ENCODE measurements at regions of chr1 and their contacts with region 1.

Region 1: DNA sequence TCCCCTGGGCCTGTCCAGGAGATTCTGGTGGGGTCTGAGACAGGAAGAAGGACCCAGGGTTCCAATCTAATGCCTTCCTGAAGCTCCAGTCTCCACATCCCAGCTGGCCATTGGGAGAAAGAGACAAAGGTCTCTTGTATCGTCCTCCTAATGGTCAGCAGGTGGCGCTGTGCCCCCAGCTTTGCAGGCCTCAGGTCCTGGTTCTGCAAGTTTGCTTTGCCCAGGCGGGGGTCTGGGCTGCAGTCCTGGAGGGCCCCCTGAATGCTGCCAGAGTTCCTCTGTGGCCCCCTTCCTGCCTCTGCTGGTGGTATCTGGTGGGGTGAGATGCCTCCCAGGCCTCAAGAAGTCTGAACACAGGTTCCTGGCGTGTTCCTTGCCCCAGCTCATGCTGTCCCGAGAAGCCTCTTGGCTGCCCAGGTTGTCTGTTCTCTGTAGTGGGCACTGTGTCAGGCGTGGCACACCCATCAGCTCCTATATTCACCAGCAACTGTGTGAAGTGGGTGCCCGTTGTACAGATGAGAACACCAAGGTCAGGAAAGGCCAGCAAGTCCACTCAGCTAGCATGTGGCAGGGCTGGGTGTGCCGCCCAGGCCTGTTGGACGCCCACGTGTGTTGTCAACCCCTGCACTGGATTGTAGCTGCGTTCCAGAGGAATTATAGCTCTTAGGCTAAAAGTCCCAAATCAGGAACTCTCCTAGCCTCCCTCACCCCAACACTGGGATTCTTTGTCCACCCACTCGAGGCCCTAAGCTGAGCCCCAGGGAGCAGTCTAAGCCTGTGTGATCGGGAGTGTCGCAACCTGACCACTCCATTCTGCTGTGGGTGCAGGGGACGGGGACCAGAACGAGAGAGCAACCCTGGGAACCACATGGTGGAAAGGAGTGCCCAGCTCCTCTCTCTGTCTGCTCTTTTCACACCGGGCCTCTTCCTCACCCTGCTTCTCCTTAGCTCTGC is 33.9 kb upstream of the CSF3R start:
- DNase-seq: peak; percentile 68
- ATAC-seq: peak; percentile 77
- H3K4me3 Mint-ChIP-seq: no peak overlapping the region
- H3K27ac Mint-ChIP-seq: no peak overlapping the region
- H3K4me1 Mint-ChIP-seq: no peaks in the 10 kb centered on the region
- H3K27me3 Mint-ChIP-seq: no peaks in the 10 kb centered on the region

Region 2: GRCh38 chr1:36239941-36240637 is 276.6 kb before region 1 on chr1:
- CTCF ChIA-PET with region 1: no interaction called
- POLR2A ChIA-PET with region 1: no interaction called
- intact Hi-C with region 1: no loop called
- DNase-seq: no peak
- ATAC-seq: no peak
- H3K4me3 Mint-ChIP-seq: no peak overlapping the region
- H3K27ac Mint-ChIP-seq: no peak overlapping the region
- H3K4me1 Mint-ChIP-seq: peaks cover 46% of the 10 kb centered on the region
- H3K27me3 Mint-ChIP-seq: no peaks in the 10 kb centered on the region

Region 3: DNA sequence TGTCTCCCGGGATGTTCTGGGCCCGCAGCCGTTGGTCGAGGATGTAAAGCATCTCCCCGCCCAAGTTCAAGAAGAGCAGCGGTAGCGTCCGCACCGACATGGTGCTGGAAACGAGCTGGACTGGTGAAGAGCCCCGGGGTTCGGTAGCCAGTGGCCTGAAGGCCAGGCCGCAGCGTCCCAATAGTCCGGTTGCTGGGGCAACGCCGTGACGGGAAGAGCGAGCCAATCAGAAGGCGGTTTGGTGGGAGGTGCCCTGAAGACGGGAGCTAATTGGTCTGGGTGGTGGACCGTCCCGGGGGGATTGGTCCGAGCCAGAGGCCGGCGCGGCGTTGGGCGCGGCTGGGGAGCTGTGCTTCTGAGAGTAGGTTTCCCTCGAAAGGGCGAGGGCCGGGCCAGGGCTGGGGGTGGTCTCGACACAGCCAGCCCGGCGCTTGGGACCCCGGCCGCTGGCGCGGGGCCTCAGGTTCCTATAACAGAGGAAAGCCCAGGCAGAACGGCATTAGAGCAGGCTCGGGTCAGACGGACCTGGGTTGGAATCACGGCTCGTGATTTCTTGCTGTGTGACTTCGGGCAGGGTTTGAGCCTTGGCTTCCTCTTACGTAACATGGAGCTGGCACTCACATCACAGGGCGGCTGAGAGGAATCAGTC is 66.3 kb before region 1 on chr1 and contains the start of gene OSCP1:
- CTCF ChIA-PET with region 1: no interaction called
- POLR2A ChIA-PET with region 1: no interaction called
- intact Hi-C with region 1: no loop called
- DNase-seq: peak; percentile 91
- ATAC-seq: peak; percentile 98
- H3K4me3 Mint-ChIP-seq: peak within 1 kb of the TSS; percentile 83
- H3K27ac Mint-ChIP-seq: peak within 1 kb of the TSS; percentile 83
- H3K4me1 Mint-ChIP-seq: peaks cover 16% of the 10 kb centered on the region
- H3K27me3 Mint-ChIP-seq: no peaks in the 10 kb centered on the region
- total RNA-seq, gene OSCP1: 2.2 to 2.8 TPM

Region 4: GRCh38 chr1:36497207-36497606 is 19.4 kb before region 1 on chr1:
- CTCF ChIA-PET with region 1: interaction called, 12 read pairs
- POLR2A ChIA-PET with region 1: no interaction called
- intact Hi-C with region 1: no loop called
- DNase-seq: no peak
- ATAC-seq: no peak
- H3K4me3 Mint-ChIP-seq: no peak overlapping the region
- H3K27ac Mint-ChIP-seq: no peak overlapping the region
- H3K4me1 Mint-ChIP-seq: no peaks in the 10 kb centered on the region
- H3K27me3 Mint-ChIP-seq: peaks cover 5% of the 10 kb centered on the region

Region 5: DNA sequence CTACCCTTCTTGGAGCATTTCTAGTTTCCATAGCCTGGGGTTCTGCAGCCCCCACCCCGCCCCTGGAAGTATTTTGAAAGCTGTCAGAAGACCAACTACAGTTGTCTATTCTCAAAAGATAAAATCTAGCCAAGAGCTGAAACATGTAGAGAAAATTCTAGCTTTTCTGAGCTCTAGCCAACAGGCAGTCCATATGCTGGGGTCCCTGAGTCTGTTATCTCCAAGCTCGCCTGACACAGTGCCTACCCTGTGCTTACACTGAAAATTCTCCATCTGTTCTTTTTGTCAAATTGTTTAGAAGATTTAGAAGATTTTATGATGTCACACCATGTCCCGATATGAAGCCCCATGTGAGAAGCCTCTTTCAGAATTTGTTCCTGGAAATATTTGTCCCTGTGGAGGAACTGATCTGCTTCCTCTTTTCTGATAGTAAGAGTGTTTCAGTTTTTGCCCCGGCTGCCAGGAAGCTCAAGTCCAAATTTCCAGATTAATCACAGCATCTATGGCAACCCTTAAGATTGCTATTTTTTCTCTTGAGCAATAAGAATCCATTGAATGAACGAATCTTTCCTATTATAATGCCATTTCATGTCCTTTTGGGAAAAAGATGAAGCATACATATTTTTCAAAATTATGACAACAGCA is 10.3 kb before region 1 on chr1:
- CTCF ChIA-PET with region 1: interaction called, 12 read pairs
- POLR2A ChIA-PET with region 1: no interaction called
- intact Hi-C with region 1: no loop called
- DNase-seq: no peak
- ATAC-seq: no peak
- H3K4me3 Mint-ChIP-seq: no peak overlapping the region
- H3K27ac Mint-ChIP-seq: no peak overlapping the region
- H3K4me1 Mint-ChIP-seq: no peaks in the 10 kb centered on the region
- H3K27me3 Mint-ChIP-seq: peaks cover 22% of the 10 kb centered on the region

Region 6: GRCh38 chr1:36553591-36554322 is 37.1 kb after region 1 on chr1:
- CTCF ChIA-PET with region 1: interaction called, 11 read pairs
- POLR2A ChIA-PET with region 1: no interaction called
- intact Hi-C with region 1: loop called in 1 of 2 experiments (anchors 2 kb)
- DNase-seq: peak; percentile 89
- ATAC-seq: peak; percentile 96
- H3K4me3 Mint-ChIP-seq: no peak overlapping the region
- H3K27ac Mint-ChIP-seq: no peak overlapping the region
- H3K4me1 Mint-ChIP-seq: no peaks in the 10 kb centered on the region
- H3K27me3 Mint-ChIP-seq: peaks cover 36% of the 10 kb centered on the region

Region 7: GRCh38 chr1:36576118-36576517 is 59.5 kb after region 1 on chr1:
- CTCF ChIA-PET with region 1: interaction called, 17 read pairs
- POLR2A ChIA-PET with region 1: no interaction called
- intact Hi-C with region 1: no loop called
- DNase-seq: peak; percentile 73
- ATAC-seq: peak; percentile 72
- H3K4me3 Mint-ChIP-seq: no peak overlapping the region
- H3K27ac Mint-ChIP-seq: no peak overlapping the region
- H3K4me1 Mint-ChIP-seq: no peaks in the 10 kb centered on the region
- H3K27me3 Mint-ChIP-seq: peaks cover 17% of the 10 kb centered on the region

Region 8: GRCh38 chr1:37434292-37434907 is 917.8 kb after region 1 on chr1:
- CTCF ChIA-PET with region 1: interaction called, 3 read pairs
- POLR2A ChIA-PET with region 1: no interaction called
- intact Hi-C with region 1: loop called in 1 of 2 experiments (anchors 2 kb)
- DNase-seq: peak; percentile 88
- ATAC-seq: peak; percentile 97
- H3K4me3 Mint-ChIP-seq: no peak overlapping the region
- H3K27ac Mint-ChIP-seq: no peak overlapping the region
- H3K4me1 Mint-ChIP-seq: no peaks in the 10 kb centered on the region
- H3K27me3 Mint-ChIP-seq: peaks cover 5% of the 10 kb centered on the region

Measured in activated CD4-positive, alpha-beta T cell treated with anti-CD3 and anti-CD28 coated beads for 36 hours (primary cell).